AG04449 (cell line): ENCODE measurements at regions of chr15 and their contacts with region 1.

Region 1: GRCh38 chr15:57866149-57866736 is 159.7 kb downstream of the POLR2M start:
- DNase-seq: no peak
- H3K4me3 ChIP-seq: no peak overlapping the region
- CTCF ChIP-seq: peak; percentile 69

Region 2: DNA sequence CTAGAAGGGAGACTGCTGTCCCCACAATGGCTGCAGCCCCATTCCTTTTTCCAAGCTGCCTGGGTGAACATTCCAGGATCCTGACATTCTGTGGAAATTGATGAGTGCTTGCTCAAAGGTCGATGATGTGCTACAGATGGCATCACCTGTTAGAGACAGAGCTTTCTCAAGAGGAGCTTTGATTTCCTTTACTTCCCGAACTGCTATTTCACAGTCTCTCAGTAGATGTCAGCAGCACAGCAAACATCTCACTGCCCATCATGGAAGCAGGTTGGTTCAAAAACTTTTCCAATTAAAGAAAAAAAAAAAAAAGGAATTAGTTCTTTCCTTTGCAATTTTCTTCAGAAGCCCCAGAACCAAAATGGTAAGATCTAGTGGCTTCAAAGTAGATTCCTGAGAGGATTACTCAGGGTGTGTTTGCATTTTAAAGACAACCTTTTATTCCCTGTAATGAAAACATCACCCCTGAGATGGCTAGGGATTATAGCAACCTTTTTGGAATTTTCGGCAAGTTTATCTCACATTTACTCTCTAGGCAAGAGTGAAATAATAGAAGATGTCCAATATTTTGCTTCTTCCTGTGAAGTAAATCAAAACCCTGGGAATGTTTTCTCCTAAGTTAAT is 115.0 kb before region 1 on chr15:
- CTCF ChIA-PET with region 1: interaction called, 209 read pairs
- POLR2A ChIA-PET with region 1: no interaction called
- DNase-seq: no peak
- H3K4me3 ChIP-seq: no peak overlapping the region
- CTCF ChIP-seq: peak; percentile 66

Region 3: DNA sequence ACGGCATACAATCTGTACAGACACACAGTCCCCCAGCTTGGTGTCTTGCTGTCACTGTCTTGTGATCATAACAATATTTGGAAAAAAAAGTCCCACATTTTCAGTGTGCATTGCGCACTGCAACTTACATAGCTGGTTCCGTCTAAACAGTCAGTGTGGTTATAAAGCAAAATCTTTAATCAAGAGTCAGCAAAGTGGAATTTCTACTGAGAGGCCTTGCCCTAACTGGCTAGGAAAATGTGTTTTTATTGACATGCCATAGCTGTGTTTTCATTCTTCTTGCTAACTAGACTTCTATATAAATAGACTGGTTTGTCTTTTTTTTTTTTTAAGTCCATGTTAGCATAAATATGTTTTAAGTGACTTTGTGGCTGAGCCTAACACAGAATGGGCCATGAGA is 15.1 kb after region 1 on chr15:
- CTCF ChIA-PET with region 1: interaction called, 16 read pairs
- POLR2A ChIA-PET with region 1: no interaction called
- DNase-seq: peak; percentile 69
- H3K4me3 ChIP-seq: no peak overlapping the region
- CTCF ChIP-seq: no peak